Activated CD8-positive, alpha-beta T cell treated with anti-CD3 and anti-CD28 coated beads for 36 hours (primary cell): ENCODE measurements at regions of chr1 and their contacts with region 1.

Region 1: DNA sequence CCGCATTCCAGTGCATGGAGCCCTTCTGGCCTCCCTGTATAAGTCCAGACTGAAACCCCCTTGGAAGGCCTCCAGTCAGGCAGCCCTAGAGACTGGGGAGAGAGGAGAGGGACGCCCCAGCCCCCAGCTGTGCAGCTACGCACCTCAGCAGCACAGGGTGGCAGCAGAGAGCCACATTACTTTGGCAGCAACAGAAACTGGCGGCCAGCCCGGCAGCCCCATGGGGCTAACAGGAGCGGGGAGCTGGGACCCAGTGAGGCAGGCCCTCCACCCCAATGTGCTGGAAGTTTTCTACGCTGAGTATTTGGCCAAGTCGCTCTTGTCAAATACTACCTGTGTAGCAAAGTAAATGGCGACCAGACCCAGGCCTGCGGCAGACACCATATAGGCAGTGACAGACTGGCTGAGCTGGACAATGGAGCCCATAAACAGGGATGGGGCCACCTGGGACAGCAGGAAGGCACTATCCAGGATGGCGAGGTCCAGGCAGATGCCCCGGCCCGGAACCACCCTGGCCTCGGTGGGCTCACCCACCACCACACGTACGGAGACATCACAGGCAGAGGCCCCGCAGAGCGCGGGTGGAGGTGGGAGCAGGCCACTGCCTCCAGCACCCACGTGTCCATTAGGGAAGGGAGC is 21.2 kb downstream of the SLC45A3 start:
- DNase-seq: peak; percentile 86
- ATAC-seq: peak; percentile 97
- H3K4me3 Mint-ChIP-seq: no peak overlapping the region
- H3K27ac Mint-ChIP-seq: no peak overlapping the region
- H3K4me1 Mint-ChIP-seq: no peaks in the 10 kb centered on the region
- H3K27me3 Mint-ChIP-seq: no peaks in the 10 kb centered on the region
- CTCF ChIP-seq: peak; percentile 90

Region 2: DNA sequence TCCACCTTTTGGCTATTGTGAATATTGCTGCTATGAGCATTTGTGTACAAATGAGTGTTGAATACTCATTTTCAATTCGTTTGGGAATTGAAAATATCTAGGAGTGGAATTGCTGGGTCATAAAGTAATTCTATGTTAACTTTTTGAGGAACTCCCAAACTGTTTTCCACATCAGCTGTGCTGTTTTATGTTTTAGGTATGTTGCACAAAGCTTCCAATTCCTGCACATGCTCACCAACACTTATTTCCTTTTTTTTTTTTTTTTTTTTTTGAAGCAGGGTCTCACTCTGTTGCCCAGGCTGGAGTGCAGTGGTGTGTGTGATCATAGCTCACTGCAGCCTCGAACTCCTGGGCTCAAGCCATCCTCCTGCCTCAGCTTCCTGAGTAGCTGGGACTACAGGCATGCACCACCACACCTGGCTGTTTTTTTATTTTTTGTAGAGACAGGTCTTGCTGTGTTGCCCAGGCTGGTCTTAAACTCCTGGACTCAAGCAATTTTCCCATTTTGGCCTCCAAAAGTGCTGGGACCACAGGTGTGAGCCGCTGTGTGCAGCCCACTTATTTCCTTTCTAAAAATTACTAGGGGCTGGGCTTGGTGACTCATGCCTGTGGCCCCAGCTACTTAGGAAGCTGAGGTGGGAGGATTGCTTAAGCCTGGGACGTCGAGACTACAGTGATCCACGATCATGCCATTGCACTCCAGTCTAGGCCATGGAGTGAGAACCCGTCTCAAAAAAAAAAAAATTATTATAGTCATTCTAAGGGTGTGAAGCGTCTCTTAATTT is 397.9 kb before region 1 on chr1:
- CTCF ChIA-PET with region 1: no interaction called
- POLR2A ChIA-PET with region 1: no interaction called
- intact Hi-C with region 1: no loop called
- DNase-seq: peak; percentile 45
- ATAC-seq: peak; percentile 74
- H3K4me3 Mint-ChIP-seq: no peak overlapping the region
- H3K27ac Mint-ChIP-seq: no peak overlapping the region
- H3K4me1 Mint-ChIP-seq: peaks cover 25% of the 10 kb centered on the region
- H3K27me3 Mint-ChIP-seq: no peaks in the 10 kb centered on the region
- CTCF ChIP-seq: no peak

Region 3: GRCh38 chr1:205365945-205366463 is 293.1 kb before region 1 on chr1:
- CTCF ChIA-PET with region 1: no interaction called
- POLR2A ChIA-PET with region 1: no interaction called
- intact Hi-C with region 1: no loop called
- DNase-seq: no peak
- ATAC-seq: no peak
- H3K4me3 Mint-ChIP-seq: no peak overlapping the region
- H3K27ac Mint-ChIP-seq: no peak overlapping the region
- H3K4me1 Mint-ChIP-seq: no peaks in the 10 kb centered on the region
- H3K27me3 Mint-ChIP-seq: no peaks in the 10 kb centered on the region
- CTCF ChIP-seq: no peak

Region 4: GRCh38 chr1:205523891-205524793 is 134.9 kb before region 1 on chr1:
- CTCF ChIA-PET with region 1: interaction called, 105 read pairs
- POLR2A ChIA-PET with region 1: no interaction called
- intact Hi-C with region 1: loop called (anchors 2 kb)
- DNase-seq: peak; percentile 85
- ATAC-seq: peak; percentile 62
- H3K4me3 Mint-ChIP-seq: no peak overlapping the region
- H3K27ac Mint-ChIP-seq: no peak overlapping the region
- H3K4me1 Mint-ChIP-seq: no peaks in the 10 kb centered on the region
- H3K27me3 Mint-ChIP-seq: no peaks in the 10 kb centered on the region
- CTCF ChIP-seq: peak; percentile 81

Region 5: GRCh38 chr1:205561501-205562203 is 97.4 kb before region 1 on chr1:
- CTCF ChIA-PET with region 1: interaction called, 16 read pairs
- POLR2A ChIA-PET with region 1: no interaction called
- intact Hi-C with region 1: no loop called
- DNase-seq: no peak
- ATAC-seq: no peak
- H3K4me3 Mint-ChIP-seq: no peak overlapping the region
- H3K27ac Mint-ChIP-seq: no peak overlapping the region
- H3K4me1 Mint-ChIP-seq: no peaks in the 10 kb centered on the region
- H3K27me3 Mint-ChIP-seq: peaks cover 35% of the 10 kb centered on the region
- CTCF ChIP-seq: no peak

Region 6: GRCh38 chr1:205591522-205592351 is 67.3 kb before region 1 on chr1:
- CTCF ChIA-PET with region 1: interaction called, 396 read pairs
- POLR2A ChIA-PET with region 1: interaction called, 16 read pairs
- intact Hi-C with region 1: loop called (anchors 1 kb)
- DNase-seq: peak; percentile 95
- ATAC-seq: peak; percentile 93
- H3K4me3 Mint-ChIP-seq: peak overlapping the region; percentile 84
- H3K27ac Mint-ChIP-seq: peak overlapping the region; percentile 93
- H3K4me1 Mint-ChIP-seq: peaks cover 38% of the 10 kb centered on the region
- H3K27me3 Mint-ChIP-seq: no peaks in the 10 kb centered on the region
- CTCF ChIP-seq: peak; percentile 96

Region 7: GRCh38 chr1:205680073-205680851 is 21.2 kb after region 1 on chr1 and contains the start of gene SLC45A3:
- CTCF ChIA-PET with region 1: interaction called, 101 read pairs
- POLR2A ChIA-PET with region 1: no interaction called
- intact Hi-C with region 1: no loop called
- DNase-seq: peak; percentile 48
- ATAC-seq: peak; percentile 79
- H3K4me3 Mint-ChIP-seq: peak within 1 kb of the TSS; percentile 72
- H3K27ac Mint-ChIP-seq: no peak within 1 kb of the TSS
- H3K4me1 Mint-ChIP-seq: peaks cover 12% of the 10 kb centered on the region
- H3K27me3 Mint-ChIP-seq: peaks cover 11% of the 10 kb centered on the region
- CTCF ChIP-seq: no peak
- total RNA-seq, gene SLC45A3: 0.38 to 0.65 TPM

Region 8: DNA sequence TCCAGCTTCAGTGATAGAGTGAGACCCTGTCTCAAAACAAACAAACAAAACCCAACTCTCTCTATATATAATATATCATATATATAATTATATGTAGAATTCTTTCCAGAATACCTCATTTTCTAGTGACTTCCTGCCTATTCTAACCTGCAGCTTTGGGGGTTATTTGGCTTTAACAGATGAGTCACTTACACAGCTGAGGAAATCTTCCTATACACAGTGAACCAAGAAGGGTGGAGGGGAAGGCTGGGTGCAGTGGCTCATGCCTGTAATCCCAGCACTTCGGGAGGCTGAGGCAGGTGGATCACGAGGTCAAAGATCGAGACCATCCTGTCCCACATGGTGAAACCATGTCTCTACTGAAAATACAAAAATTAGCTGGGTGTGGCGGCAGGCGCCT is 107.0 kb after region 1 on chr1:
- CTCF ChIA-PET with region 1: no interaction called
- POLR2A ChIA-PET with region 1: no interaction called
- intact Hi-C with region 1: no loop called
- DNase-seq: no peak
- ATAC-seq: peak; percentile 69
- H3K4me3 Mint-ChIP-seq: no peak overlapping the region
- H3K27ac Mint-ChIP-seq: peak overlapping the region; percentile 46
- H3K4me1 Mint-ChIP-seq: peaks cover 29% of the 10 kb centered on the region
- H3K27me3 Mint-ChIP-seq: no peaks in the 10 kb centered on the region
- CTCF ChIP-seq: no peak

Region 9: DNA sequence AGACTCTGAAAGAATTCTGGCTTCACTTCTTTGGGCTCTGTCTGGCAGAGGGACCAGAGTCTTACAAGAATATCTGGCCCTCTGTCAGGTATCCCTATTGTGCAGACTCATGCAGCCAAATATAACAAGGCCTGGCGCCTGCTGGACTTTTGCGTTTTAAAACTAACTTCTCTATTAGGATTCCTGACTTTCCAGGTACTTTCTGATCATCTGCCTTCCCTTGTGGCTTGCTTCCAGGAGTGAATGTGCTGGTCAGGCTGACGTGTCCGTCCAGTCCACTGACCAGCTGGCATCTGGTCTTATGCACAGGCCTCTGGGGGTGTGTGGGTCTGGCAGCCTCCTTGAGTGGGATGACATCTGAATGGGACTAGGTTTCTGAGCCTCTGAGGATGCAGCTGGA is 124.8 kb after region 1 on chr1:
- CTCF ChIA-PET with region 1: interaction called, 30 read pairs
- POLR2A ChIA-PET with region 1: no interaction called
- intact Hi-C with region 1: no loop called
- DNase-seq: no peak
- ATAC-seq: no peak
- H3K4me3 Mint-ChIP-seq: no peak overlapping the region
- H3K27ac Mint-ChIP-seq: no peak overlapping the region
- H3K4me1 Mint-ChIP-seq: peaks cover 7% of the 10 kb centered on the region
- H3K27me3 Mint-ChIP-seq: no peaks in the 10 kb centered on the region
- CTCF ChIP-seq: no peak

Region 10: DNA sequence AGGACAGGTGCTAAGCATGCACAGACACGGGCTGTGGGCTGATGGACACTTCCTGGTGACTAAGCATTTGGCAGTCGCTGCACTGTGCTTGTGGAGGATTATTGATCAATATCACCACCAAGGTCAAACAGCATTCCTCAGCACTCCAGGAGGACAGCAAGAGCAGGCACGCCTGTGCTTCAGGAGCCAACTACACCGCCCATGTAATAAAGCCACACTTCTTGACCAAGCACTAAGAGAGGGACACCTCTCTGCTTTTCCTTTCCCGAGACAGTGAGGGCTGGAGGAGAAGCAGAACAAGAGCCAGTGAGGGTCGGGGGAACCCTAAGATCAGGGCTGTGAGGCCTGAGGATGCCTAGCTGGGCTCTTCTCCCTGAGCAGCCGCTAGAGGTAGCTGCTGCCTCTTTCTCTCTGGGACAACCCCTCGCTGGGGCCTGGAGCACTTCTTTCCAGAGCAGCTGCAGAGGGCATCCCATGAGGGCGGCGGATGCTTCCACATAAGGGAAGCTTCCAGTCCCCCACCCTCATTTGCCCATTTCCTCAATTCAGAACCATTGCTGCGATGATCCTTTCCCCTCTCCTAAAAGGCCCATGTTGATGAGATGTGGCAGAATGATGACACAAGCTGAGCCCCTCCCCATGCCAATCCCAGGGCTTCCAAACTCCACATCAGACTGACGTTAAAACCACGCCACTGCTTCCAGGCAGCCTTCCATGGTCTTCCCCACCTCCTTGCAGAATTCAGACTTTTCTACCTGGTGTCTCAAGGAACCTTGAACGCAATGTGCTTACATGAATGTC is 325.1 kb after region 1 on chr1:
- CTCF ChIA-PET with region 1: interaction called, 112 read pairs
- POLR2A ChIA-PET with region 1: no interaction called
- intact Hi-C with region 1: loop called (anchors 5 kb)
- DNase-seq: peak; percentile 59
- ATAC-seq: peak; percentile 77
- H3K4me3 Mint-ChIP-seq: no peak overlapping the region
- H3K27ac Mint-ChIP-seq: no peak overlapping the region
- H3K4me1 Mint-ChIP-seq: no peaks in the 10 kb centered on the region
- H3K27me3 Mint-ChIP-seq: no peaks in the 10 kb centered on the region
- CTCF ChIP-seq: peak; percentile 46